GM12878 (cell line): ENCODE measurements at regions of chr14 and their contacts with region 1.

Region 1: GRCh38 chr14:92513204-92513973 is at the start of gene RIN3:
- DNase-seq: no peak
- ATAC-seq: peak; percentile 83
- H3K4me3 ChIP-seq: peak within 1 kb of the TSS; percentile 49
- H3K27ac ChIP-seq: no peak within 1 kb of the TSS; the same call in 1 of the 2 replicates
- H3K4me1 ChIP-seq: peaks cover 10% of the 10 kb centered on the region
- H3K27me3 ChIP-seq: no peaks in the 10 kb centered on the region; a peak in 1 of 4 replicates
- CTCF ChIP-seq: no peak
- EP300 ChIP-seq: no peak
- POLR2A ChIP-seq: peak; percentile 69
- RAD21 ChIP-seq: no peak
- polyA plus RNA-seq, gene RIN3: 0.91 to 0.95 TPM

Region 2: GRCh38 chr14:92538412-92538985 is 25.1 kb after region 1 on chr14:
- CTCF ChIA-PET with region 1: interaction called, 3 read pairs
- POLR2A ChIA-PET with region 1: interaction called, 6 read pairs
- RAD21 ChIA-PET with region 1: interaction called, 3 read pairs
- SMC1A ChIA-PET with region 1: interaction called, 10 read pairs
- in situ Hi-C with region 1: no loop called
- intact Hi-C with region 1: no loop called
- DNase-seq: peak; percentile 42
- ATAC-seq: peak; percentile 77
- H3K4me3 ChIP-seq: no peak overlapping the region
- H3K27ac ChIP-seq: no peak overlapping the region; the same call in 1 of the 2 replicates
- H3K4me1 ChIP-seq: peaks cover 28% of the 10 kb centered on the region
- H3K27me3 ChIP-seq: no peaks in the 10 kb centered on the region
- CTCF ChIP-seq: no peak
- EP300 ChIP-seq: no peak
- POLR2A ChIP-seq: no peak
- RAD21 ChIP-seq: no peak

Region 3: DNA sequence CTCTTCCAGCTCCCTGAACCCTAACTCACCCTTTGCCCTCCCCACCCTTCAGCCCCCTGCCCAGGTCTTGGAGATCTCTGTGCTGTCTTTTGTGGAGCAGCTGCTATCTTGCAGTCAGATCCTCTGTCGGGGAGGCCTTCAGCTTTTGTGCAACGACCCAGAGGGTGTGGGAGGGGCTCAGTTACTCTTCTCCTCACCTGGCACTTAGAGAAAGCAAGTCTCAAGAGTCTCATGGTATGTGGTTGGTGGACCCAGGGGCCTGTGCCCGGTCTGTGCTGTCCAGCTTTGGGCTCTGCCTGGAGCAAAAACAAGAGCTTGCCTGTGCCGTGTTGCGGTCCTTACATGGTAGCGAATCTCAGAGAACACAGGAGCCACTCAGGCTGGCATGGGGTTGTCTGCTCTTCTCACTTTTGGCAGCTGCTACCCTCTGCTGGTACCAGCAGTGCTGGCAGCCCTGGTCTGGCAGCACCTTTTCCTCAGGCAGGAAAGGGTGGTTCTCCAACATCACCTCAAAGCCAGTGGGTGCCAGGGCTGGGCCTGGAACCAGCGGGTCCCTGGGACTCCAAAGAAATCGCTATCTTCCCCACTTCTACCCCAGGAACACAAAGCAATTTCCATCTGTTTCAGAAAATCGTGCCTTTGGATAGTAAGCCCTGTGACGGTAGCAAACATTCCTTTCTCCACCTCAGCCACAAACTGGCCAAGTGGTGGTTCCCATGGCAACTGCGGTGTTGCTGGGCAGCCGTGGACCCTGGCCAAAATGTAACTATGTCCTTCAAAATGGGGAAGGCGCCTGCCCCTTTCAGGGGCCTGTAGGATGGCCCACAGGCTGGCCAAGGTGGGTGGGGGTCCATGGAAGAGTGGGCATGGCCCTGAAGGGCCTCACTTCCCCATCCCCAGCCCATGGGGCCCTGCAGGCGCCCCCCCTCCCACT is 90.2 kb after region 1 on chr14:
- CTCF ChIA-PET with region 1: no interaction called
- POLR2A ChIA-PET with region 1: no interaction called
- RAD21 ChIA-PET with region 1: no interaction called
- SMC1A ChIA-PET with region 1: no interaction called
- in situ Hi-C with region 1: no loop called
- intact Hi-C with region 1: no loop called
- DNase-seq: no peak
- ATAC-seq: peak; percentile 47; the same call in 2 of the 3 replicates
- H3K4me3 ChIP-seq: no peak overlapping the region
- H3K27ac ChIP-seq: no peak overlapping the region
- H3K4me1 ChIP-seq: no peaks in the 10 kb centered on the region; the same call in 1 of the 2 replicates
- H3K27me3 ChIP-seq: no peaks in the 10 kb centered on the region
- CTCF ChIP-seq: peak in 2 of 3 experiments; percentile 21 to 30; a peak in 2 of 6 replicates
- EP300 ChIP-seq: no peak
- POLR2A ChIP-seq: no peak
- RAD21 ChIP-seq: no peak